ENCODE measurements at regions of chr10 and their contacts with region 1.

Region 1: DNA sequence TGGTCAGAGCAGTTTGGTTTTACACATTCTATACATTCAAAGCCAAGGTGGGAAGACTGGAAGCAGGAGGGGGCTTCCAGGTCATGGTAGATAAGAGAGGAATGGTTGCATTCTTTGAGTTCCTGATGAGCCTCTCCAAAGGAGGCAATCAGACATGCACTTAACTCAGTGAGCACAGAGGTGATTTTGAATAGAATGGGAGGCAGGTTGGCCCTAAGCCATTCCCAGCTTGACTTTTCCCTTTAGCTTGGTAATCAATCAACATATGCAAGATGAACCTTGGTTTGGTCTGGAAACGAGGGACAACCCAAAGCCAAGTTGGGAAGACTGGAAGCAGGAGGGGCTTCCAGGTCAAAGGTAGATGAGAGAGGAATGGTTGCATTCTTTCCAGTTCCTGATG is 31.4 kb downstream of the TCERG1L start:
- DNase-seq: no peak
- ATAC-seq: no peak
- H3K4me3 ChIP-seq: no peak overlapping the region
- H3K27ac ChIP-seq: no peak overlapping the region
- H3K4me1 ChIP-seq: no peaks in the 10 kb centered on the region
- H3K27me3 ChIP-seq: peaks cover 2% of the 10 kb centered on the region; the same call in 1 of the 2 replicates
- CTCF ChIP-seq: no peak

Region 2: GRCh38 chr10:131162866-131163843 is 116.9 kb before region 1 on chr10:
- CTCF ChIA-PET with region 1: no interaction called
- POLR2A ChIA-PET with region 1: no interaction called
- in situ Hi-C with region 1: no loop called
- intact Hi-C with region 1: no loop called
- DNase-seq: no peak
- ATAC-seq: no peak
- H3K4me3 ChIP-seq: no peak overlapping the region
- H3K27ac ChIP-seq: no peak overlapping the region
- H3K4me1 ChIP-seq: no peaks in the 10 kb centered on the region
- H3K27me3 ChIP-seq: peaks cover 5% of the 10 kb centered on the region; the same call in 1 of the 2 replicates
- CTCF ChIP-seq: no peak

Region 3: GRCh38 chr10:131242007-131242406 is 38.1 kb before region 1 on chr10:
- CTCF ChIA-PET with region 1: no interaction called
- POLR2A ChIA-PET with region 1: no interaction called
- in situ Hi-C with region 1: no loop called
- intact Hi-C with region 1: no loop called
- DNase-seq: no peak
- ATAC-seq: peak; percentile 65; the same call in 1 of the 2 replicates
- H3K4me3 ChIP-seq: no peak overlapping the region
- H3K27ac ChIP-seq: no peak overlapping the region
- H3K4me1 ChIP-seq: no peaks in the 10 kb centered on the region
- H3K27me3 ChIP-seq: peaks cover 24% of the 10 kb centered on the region
- CTCF ChIP-seq: peak; percentile 81

Region 4: DNA sequence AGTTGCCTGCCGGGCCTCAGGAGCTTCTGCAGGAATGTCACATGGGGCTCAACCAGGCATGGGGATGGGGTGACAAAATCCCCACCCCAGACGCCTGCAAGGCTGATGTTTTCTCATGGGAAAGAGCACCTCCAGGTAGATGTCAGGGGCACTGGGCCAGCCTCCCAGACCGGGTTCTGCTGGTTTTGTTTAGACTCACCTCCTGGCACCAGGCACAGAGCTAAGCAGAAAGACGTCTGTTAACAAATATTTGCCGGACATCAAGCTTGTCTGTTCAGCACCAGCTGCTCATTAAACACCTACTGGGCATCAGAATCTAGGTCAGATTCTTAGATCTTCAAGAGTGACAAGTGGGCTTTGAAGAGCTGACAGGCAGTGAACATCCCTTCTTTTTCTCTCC is 66.4 kb after region 1 on chr10:
- CTCF ChIA-PET with region 1: no interaction called
- POLR2A ChIA-PET with region 1: interaction called, 11 read pairs
- in situ Hi-C with region 1: no loop called
- intact Hi-C with region 1: no loop called
- DNase-seq: no peak
- ATAC-seq: no peak; the same call in 1 of the 2 replicates
- H3K4me3 ChIP-seq: no peak overlapping the region
- H3K27ac ChIP-seq: no peak overlapping the region
- H3K4me1 ChIP-seq: no peaks in the 10 kb centered on the region
- H3K27me3 ChIP-seq: peaks cover 17% of the 10 kb centered on the region; the same call in 1 of the 2 replicates
- CTCF ChIP-seq: no peak

Measured in Panc1 (cell line).